B cell (primary cell): ENCODE measurements at regions of chr19 and their contacts with region 1.

Region 1: DNA sequence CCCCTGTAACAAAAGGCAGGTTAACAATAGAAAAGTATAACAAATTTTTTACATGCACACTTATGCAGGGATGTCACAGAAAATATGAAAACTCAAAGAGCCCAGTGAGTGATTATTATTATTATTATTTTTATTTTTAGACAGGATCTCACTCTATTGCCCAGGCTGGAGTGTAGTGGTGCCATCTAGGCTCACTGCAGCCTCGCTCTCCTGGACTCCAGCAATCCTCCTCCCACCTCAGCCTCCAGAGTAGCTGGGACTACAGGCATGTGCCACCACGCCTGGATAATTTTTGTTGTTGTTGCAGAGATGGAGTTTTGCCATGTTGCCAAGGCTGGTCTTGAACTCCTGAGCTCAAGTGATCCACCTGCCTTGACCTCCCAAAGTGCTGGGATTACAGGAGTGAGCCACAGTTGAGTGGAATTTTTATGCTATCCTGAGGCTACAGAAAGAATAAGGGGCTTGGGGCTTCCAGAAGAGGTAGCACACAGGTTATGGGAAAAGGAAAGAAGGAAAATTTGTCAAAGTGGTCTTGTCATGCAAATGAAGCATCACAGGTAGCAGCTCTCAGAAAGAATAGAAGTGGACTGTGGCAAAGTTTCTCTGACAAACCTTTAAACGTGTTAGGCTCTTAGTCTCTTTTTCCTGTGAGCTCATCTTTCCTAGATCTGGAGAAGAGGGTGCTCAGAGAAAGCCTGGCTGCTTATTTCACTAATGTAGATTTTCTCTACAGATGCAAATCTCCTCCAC is 87.7 kb upstream of the LSM14A start:
- DNase-seq: no peak
- ATAC-seq: no peak
- H3K4me3 ChIP-seq: no peak overlapping the region
- H3K4me3 Mint-ChIP-seq: no peak overlapping the region
- H3K27ac ChIP-seq: no peak overlapping the region
- H3K27ac Mint-ChIP-seq: no peak overlapping the region
- H3K4me1 ChIP-seq: no peaks in the 10 kb centered on the region
- H3K4me1 Mint-ChIP-seq: no peaks in the 10 kb centered on the region
- H3K27me3 ChIP-seq: peaks cover 0 to 7% (median 2%) of the 10 kb centered on the region in 4 experiments
- H3K27me3 Mint-ChIP-seq: peaks cover 46% of the 10 kb centered on the region
- CTCF ChIP-seq: no peak

Region 2: DNA sequence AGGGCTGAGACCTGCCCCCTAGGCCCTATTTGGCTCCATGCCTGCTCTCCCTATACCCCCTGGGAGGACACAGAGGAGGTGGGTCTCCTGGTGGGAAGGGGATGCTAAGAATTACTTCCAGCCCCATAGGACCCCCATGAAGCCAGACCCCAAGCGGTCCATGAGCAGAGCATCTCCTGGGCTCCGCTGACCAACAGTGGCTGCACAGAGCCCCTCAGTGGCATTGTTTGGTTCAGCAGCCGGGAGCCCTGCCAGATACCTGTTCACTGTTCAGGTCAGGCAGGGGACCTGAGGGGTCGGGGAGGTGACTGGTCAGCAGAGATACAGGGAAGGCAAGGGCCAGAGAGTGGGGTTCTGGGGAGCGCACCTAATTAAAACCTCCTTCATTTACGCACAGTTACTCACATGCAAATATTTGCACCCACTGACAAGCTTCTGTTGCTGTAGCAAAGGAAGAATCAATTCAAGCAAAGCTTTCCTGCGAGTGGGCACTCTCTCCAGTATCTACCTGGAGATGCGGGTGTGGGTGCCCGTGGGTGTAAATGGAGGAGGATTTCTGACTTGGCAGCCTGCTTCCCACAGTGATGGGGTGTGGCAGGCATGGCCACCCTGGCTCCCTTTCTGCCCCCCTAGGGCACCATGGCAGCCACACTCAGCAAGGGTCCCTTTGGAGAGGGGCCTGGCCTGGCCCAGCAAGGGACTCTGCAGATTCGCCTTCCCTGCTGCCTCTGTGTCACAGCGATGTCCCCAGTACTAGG is 379.3 kb before region 1 on chr19:
- CTCF ChIA-PET with region 1: no interaction called
- POLR2A ChIA-PET with region 1: no interaction called
- intact Hi-C with region 1: no loop called
- DNase-seq: no peak
- ATAC-seq: no peak
- H3K4me3 ChIP-seq: no peak overlapping the region
- H3K4me3 Mint-ChIP-seq: no peak overlapping the region
- H3K27ac ChIP-seq: no peak overlapping the region
- H3K27ac Mint-ChIP-seq: no peak overlapping the region
- H3K4me1 ChIP-seq: no peaks in the 10 kb centered on the region
- H3K4me1 Mint-ChIP-seq: no peaks in the 10 kb centered on the region
- H3K27me3 ChIP-seq: no peaks in the 10 kb centered on the region
- H3K27me3 Mint-ChIP-seq: no peaks in the 10 kb centered on the region
- CTCF ChIP-seq: no peak

Region 3: GRCh38 chr19:34096020-34096915 is 11.7 kb after region 1 on chr19:
- CTCF ChIA-PET with region 1: interaction called, 10 read pairs
- POLR2A ChIA-PET with region 1: no interaction called
- intact Hi-C with region 1: no loop called
- DNase-seq: peak; percentile 51
- ATAC-seq: no peak
- H3K4me3 ChIP-seq: no peak overlapping the region
- H3K4me3 Mint-ChIP-seq: no peak overlapping the region
- H3K27ac ChIP-seq: no peak overlapping the region
- H3K27ac Mint-ChIP-seq: no peak overlapping the region
- H3K4me1 ChIP-seq: no peaks in the 10 kb centered on the region
- H3K4me1 Mint-ChIP-seq: peaks cover 2% of the 10 kb centered on the region
- H3K27me3 ChIP-seq: peaks cover 0 to 11% (median 0%) of the 10 kb centered on the region in 4 experiments
- H3K27me3 Mint-ChIP-seq: peaks cover 28% of the 10 kb centered on the region
- CTCF ChIP-seq: peak; percentile 69

Region 4: DNA sequence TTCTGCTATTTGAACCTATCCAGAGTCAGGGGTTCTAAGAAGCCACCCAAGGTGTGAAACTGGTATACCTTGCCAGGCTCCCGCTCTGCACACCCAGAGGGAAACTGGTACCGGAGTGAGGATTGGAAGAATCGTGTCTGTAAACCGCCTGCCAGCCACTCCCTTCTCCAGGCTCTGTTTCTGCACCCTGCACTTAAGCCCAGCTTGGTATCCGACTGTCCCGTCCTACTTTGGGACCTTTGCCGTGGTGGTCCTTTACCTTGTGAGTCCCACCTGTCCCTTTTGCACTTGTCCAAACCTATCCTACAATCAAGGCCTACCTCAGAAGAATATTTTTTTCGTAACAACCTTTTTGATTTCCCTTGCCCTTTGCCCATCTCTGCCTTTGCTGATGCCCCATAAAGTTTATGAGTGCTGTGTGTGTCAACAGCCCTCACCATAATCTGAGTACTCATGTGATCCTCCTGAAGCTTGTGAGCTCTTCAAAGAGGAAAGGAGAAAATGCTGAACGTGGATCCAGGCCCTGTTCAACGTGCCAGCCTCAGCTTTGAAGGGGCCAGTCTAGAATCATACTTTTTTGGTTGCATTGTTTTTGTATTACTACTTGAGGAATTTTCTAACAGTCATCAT is 214.4 kb after region 1 on chr19:
- CTCF ChIA-PET with region 1: no interaction called
- POLR2A ChIA-PET with region 1: no interaction called
- intact Hi-C with region 1: no loop called
- DNase-seq: no peak
- ATAC-seq: no peak
- H3K4me3 ChIP-seq: no peak overlapping the region
- H3K4me3 Mint-ChIP-seq: no peak overlapping the region
- H3K27ac ChIP-seq: no peak overlapping the region
- H3K27ac Mint-ChIP-seq: no peak overlapping the region
- H3K4me1 ChIP-seq: no peaks in the 10 kb centered on the region
- H3K4me1 Mint-ChIP-seq: peaks cover 2% of the 10 kb centered on the region
- H3K27me3 ChIP-seq: no peaks in the 10 kb centered on the region
- H3K27me3 Mint-ChIP-seq: no peaks in the 10 kb centered on the region
- CTCF ChIP-seq: no peak